Heart right ventricle (tissue), 16 donors: ENCODE measurements at regions of chr6 and their contacts with region 1.

Region 1: GRCh38 chr6:71190809-71191208 is 97.8 kb upstream of the OGFRL1 start:
- DNase-seq: no peak
- ATAC-seq: no peak
- H3K4me3 ChIP-seq: no peak overlapping the region
- H3K27ac ChIP-seq: no peak overlapping the region
- H3K4me1 ChIP-seq: no peaks in the 10 kb centered on the region
- H3K27me3 ChIP-seq: no peaks in the 10 kb centered on the region
- CTCF ChIP-seq: peak; percentile 6 to 61 (median 43)

Region 2: GRCh38 chr6:71248306-71248765 is 57.5 kb after region 1 on chr6:
- intact Hi-C with region 1: loop called in 1 of 10 experiments (anchors 10 kb)
- DNase-seq: peak in 1 of 2 donors; percentile 9
- ATAC-seq: peak in 7 of 8 donors; percentile 21 to 68 (median 52)
- H3K4me3 ChIP-seq: no peak overlapping the region
- H3K27ac ChIP-seq: peak overlapping the region in 3 of 10 donors; percentile 6 to 83 (median 79)
- H3K4me1 ChIP-seq: peaks cover 0 to 56% (median 36%) of the 10 kb centered on the region in 9 donors
- H3K27me3 ChIP-seq: no peaks in the 10 kb centered on the region
- CTCF ChIP-seq: no peak

Region 3: GRCh38 chr6:71444222-71444621 is 253.4 kb after region 1 on chr6:
- intact Hi-C with region 1: loop called in 1 of 10 experiments (anchors 5 kb)
- DNase-seq: no peak
- ATAC-seq: peak in 5 of 8 donors; percentile 67 to 85 (median 73)
- H3K4me3 ChIP-seq: peak overlapping the region in 1 of 10 donors; percentile 24
- H3K27ac ChIP-seq: no peak overlapping the region
- H3K4me1 ChIP-seq: peaks cover 0 to 21% (median 0%) of the 10 kb centered on the region in 9 donors
- H3K27me3 ChIP-seq: no peaks in the 10 kb centered on the region
- CTCF ChIP-seq: peak in 7 of 9 donors; percentile 22 to 58 (median 26)